CD8-positive, alpha-beta T cell (primary cell): ENCODE measurements at regions of chr11 and their contacts with region 1.

Region 1: DNA sequence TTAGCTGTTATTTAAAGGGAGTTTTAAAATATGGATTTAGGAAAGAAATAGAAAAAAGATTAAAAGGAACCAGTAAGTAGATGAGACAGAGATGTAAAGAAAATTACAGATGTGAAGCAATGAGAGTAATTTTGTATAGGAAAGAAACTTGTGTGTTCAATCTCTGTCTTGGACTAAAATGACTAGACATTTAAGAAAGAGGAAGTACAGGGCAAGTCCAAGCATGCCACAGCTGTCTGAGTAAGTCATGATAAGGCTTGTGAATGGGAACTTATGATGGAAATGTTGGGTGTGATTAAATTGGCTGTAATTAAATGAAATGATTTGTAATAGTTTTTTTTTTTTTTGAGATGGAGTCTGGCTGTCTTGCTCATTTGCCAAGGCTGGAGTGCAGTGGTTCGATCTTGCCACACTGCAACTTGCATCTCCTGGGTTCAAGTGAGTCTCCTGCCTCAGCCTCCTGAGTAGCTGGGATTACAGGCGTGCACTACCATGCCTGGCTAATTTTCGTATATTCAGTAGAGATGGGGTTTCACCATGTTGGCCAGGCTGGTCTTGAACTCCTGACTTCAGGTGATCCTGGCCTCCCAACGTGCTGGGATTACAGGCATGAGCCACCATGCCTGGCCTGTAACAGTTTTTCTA is 5.9 kb upstream of the ACY3 start:
- DNase-seq: no peak
- ATAC-seq: no peak
- H3K4me3 ChIP-seq: no peak overlapping the region
- H3K4me3 Mint-ChIP-seq: no peak overlapping the region
- H3K27ac ChIP-seq: no peak overlapping the region
- H3K27ac Mint-ChIP-seq: no peak overlapping the region
- H3K4me1 ChIP-seq: no peaks in the 10 kb centered on the region
- H3K4me1 Mint-ChIP-seq: no peaks in the 10 kb centered on the region
- H3K27me3 ChIP-seq: no peaks in the 10 kb centered on the region
- H3K27me3 Mint-ChIP-seq: no peaks in the 10 kb centered on the region
- CTCF ChIP-seq: no peak

Region 2: DNA sequence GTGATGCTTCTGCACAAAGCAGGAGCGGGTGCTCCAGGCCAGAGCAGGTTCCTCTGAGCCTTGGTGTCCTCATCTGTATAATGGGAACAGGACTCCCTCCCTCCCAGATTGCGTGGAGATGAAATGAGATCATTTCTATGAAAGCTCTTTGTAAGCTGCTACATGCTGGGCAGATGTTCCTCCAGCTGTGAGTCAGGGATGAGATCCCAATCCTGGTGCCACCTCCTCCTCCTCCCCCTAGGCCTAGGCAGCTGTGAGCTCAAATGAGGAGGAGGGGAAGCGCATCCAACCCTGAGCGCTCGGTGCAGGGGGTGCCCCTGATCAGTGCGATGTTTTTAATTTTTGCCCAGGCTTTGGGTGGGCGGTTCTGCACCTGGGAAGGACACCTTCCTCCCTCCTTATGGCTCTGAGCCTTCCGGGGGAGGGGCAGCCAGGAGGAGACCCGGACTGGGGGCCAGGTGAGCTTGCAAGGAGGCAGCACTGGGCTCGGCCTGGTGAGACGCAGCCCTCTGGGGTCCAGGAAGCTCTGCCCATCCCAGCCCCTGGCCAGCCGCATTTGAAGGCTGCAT is 126.0 kb before region 1 on chr11:
- CTCF ChIA-PET with region 1: no interaction called
- POLR2A ChIA-PET with region 1: no interaction called
- intact Hi-C with region 1: no loop called
- DNase-seq: no peak
- ATAC-seq: no peak
- H3K4me3 ChIP-seq: no peak overlapping the region
- H3K4me3 Mint-ChIP-seq: no peak overlapping the region
- H3K27ac ChIP-seq: no peak overlapping the region
- H3K27ac Mint-ChIP-seq: no peak overlapping the region
- H3K4me1 ChIP-seq: no peaks in the 10 kb centered on the region
- H3K4me1 Mint-ChIP-seq: no peaks in the 10 kb centered on the region
- H3K27me3 ChIP-seq: peaks cover 0 to 2% of the 10 kb centered on the region in 2 experiments
- H3K27me3 Mint-ChIP-seq: peaks cover 21% of the 10 kb centered on the region
- CTCF ChIP-seq: no peak

Region 3: GRCh38 chr11:67572747-67573419 is 83.5 kb before region 1 on chr11:
- CTCF ChIA-PET with region 1: interaction called, 6 read pairs
- POLR2A ChIA-PET with region 1: no interaction called
- intact Hi-C with region 1: loop called in 1 of 2 experiments (anchors 1 kb)
- DNase-seq: peak in 4 of 9 experiments; percentile 29 to 62 (median 42)
- ATAC-seq: no peak
- H3K4me3 ChIP-seq: no peak overlapping the region
- H3K4me3 Mint-ChIP-seq: no peak overlapping the region
- H3K27ac ChIP-seq: no peak overlapping the region
- H3K27ac Mint-ChIP-seq: no peak overlapping the region
- H3K4me1 ChIP-seq: no peaks in the 10 kb centered on the region
- H3K4me1 Mint-ChIP-seq: no peaks in the 10 kb centered on the region
- H3K27me3 ChIP-seq: peaks cover 0 to 2% of the 10 kb centered on the region in 2 experiments
- H3K27me3 Mint-ChIP-seq: peaks cover 13% of the 10 kb centered on the region
- CTCF ChIP-seq: peak; percentile 22

Region 4: DNA sequence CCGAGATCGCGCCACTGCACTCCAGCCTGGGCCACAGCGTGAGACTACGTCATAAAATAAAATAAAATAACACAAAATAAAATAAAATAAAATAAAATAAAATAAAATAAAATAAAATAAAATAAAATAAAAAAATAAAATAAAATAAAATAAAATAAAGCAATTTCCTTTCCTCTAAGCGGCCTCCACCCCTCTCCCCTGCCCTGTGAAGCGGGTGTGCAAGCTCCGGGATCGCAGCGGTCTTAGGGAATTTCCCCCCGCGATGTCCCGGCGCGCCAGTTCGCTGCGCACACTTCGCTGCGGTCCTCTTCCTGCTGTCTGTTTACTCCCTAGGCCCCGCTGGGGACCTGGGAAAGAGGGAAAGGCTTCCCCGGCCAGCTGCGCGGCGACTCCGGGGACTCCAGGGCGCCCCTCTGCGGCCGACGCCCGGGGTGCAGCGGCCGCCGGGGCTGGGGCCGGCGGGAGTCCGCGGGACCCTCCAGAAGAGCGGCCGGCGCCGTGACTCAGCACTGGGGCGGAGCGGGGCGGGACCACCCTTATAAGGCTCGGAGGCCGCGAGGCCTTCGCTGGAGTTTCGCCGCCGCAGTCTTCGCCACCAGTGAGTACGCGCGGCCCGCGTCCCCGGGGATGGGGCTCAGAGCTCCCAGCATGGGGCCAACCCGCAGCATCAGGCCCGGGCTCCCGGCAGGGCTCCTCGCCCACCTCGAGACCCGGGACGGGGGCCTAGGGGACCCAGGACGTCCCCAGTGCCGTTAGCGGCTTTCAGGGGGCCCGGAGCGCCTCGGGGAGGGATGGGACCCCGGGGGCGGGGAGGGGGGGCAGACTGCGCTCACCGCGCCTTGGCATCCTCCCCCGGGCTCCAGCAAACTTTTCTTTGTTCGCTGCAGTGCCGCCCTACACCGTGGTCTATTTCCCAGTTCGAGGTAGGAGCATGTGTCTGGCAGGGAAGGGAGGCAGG is 72.9 kb before region 1 on chr11 and contains the start of gene GSTP1:
- CTCF ChIA-PET with region 1: no interaction called
- POLR2A ChIA-PET with region 1: no interaction called
- intact Hi-C with region 1: no loop called
- DNase-seq: peak; percentile 42 to 90 (median 79)
- ATAC-seq: peak; percentile 86
- H3K4me3 ChIP-seq: peak within 1 kb of the TSS; percentile 61 to 69
- H3K4me3 Mint-ChIP-seq: peak within 1 kb of the TSS; percentile 88
- H3K27ac ChIP-seq: peak within 1 kb of the TSS; percentile 59 to 75
- H3K27ac Mint-ChIP-seq: peak within 1 kb of the TSS; percentile 85
- H3K4me1 ChIP-seq: peaks cover 24% of the 10 kb centered on the region
- H3K4me1 Mint-ChIP-seq: peaks cover 44% of the 10 kb centered on the region
- H3K27me3 ChIP-seq: no peaks in the 10 kb centered on the region
- H3K27me3 Mint-ChIP-seq: no peaks in the 10 kb centered on the region
- CTCF ChIP-seq: peak; percentile 48
- total RNA-seq, gene GSTP1: 56.8 to 56.9 TPM

Region 5: DNA sequence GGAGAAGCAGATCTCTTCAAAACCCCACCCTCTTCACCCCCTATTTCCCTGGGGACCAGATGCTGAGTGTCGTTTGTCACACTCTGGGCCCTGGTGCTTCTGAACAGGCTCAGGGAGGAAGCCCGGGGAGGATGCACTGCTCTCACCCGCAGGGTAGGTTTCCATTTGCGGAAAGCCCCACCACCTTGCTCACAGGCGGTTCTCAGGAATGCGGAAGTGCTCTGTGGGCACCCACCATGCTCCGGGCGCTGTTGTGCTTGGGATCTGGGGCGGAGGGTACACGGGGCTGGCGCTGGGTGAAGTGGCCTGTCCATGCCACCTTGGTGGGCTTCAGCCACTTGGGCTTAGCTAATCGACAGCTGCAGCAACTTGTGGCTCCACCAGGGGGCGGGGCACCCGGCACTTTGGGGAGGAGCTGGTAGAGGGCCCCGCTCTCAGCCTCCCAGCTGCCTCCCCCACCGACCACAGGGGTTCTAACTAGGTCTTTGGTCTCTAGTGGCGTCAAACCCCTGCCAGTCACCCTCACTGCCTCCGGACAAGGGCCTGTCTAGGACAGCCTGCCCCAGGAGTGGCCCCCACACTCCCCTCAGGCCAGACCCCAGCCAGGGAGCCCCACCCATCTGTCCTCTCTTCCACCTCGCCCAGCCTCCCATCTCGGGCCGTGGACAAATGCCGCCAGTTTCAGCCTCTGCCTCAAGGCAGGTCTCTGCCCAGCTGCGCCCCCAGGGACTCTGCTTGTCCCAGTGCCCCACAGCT is 42.3 kb before region 1 on chr11:
- CTCF ChIA-PET with region 1: interaction called, 5 read pairs
- POLR2A ChIA-PET with region 1: no interaction called
- intact Hi-C with region 1: loop called in 1 of 2 experiments (anchors 1 kb)
- DNase-seq: peak; percentile 62 to 96 (median 86)
- ATAC-seq: peak; percentile 91
- H3K4me3 ChIP-seq: peak overlapping the region; percentile 55 to 61
- H3K4me3 Mint-ChIP-seq: peak overlapping the region; percentile 82
- H3K27ac ChIP-seq: peak overlapping the region; percentile 84 to 99
- H3K27ac Mint-ChIP-seq: peak overlapping the region; percentile 98
- H3K4me1 ChIP-seq: peaks cover 35% of the 10 kb centered on the region
- H3K4me1 Mint-ChIP-seq: peaks cover 29% of the 10 kb centered on the region
- H3K27me3 ChIP-seq: no peaks in the 10 kb centered on the region
- H3K27me3 Mint-ChIP-seq: no peaks in the 10 kb centered on the region
- CTCF ChIP-seq: peak; percentile 56

Region 6: GRCh38 chr11:67640021-67640757 is 16.2 kb before region 1 on chr11:
- CTCF ChIA-PET with region 1: interaction called, 126 read pairs
- POLR2A ChIA-PET with region 1: no interaction called
- intact Hi-C with region 1: loop called in 1 of 2 experiments (anchors 1 kb)
- DNase-seq: peak in 8 of 9 experiments; percentile 35 to 73 (median 59)
- ATAC-seq: peak; percentile 74
- H3K4me3 ChIP-seq: no peak overlapping the region
- H3K4me3 Mint-ChIP-seq: no peak overlapping the region
- H3K27ac ChIP-seq: no peak overlapping the region
- H3K27ac Mint-ChIP-seq: no peak overlapping the region
- H3K4me1 ChIP-seq: no peaks in the 10 kb centered on the region
- H3K4me1 Mint-ChIP-seq: peaks cover 3% of the 10 kb centered on the region
- H3K27me3 ChIP-seq: no peaks in the 10 kb centered on the region
- H3K27me3 Mint-ChIP-seq: no peaks in the 10 kb centered on the region
- CTCF ChIP-seq: peak; percentile 38

Region 7: GRCh38 chr11:68342459-68343158 is 686.2 kb after region 1 on chr11:
- CTCF ChIA-PET with region 1: no interaction called
- POLR2A ChIA-PET with region 1: no interaction called
- intact Hi-C with region 1: no loop called
- DNase-seq: no peak
- ATAC-seq: no peak
- H3K4me3 ChIP-seq: no peak overlapping the region
- H3K4me3 Mint-ChIP-seq: no peak overlapping the region
- H3K27ac ChIP-seq: no peak overlapping the region
- H3K27ac Mint-ChIP-seq: no peak overlapping the region
- H3K4me1 ChIP-seq: peaks cover 9% of the 10 kb centered on the region
- H3K4me1 Mint-ChIP-seq: peaks cover 30% of the 10 kb centered on the region
- H3K27me3 ChIP-seq: no peaks in the 10 kb centered on the region
- H3K27me3 Mint-ChIP-seq: no peaks in the 10 kb centered on the region
- CTCF ChIP-seq: no peak